PC-9 (cell line): ENCODE measurements at regions of chr1 and their contacts with region 1.

Region 1: GRCh38 chr1:41381692-41382477 is 20.7 kb downstream of the FOXO6 start:
- DNase-seq: peak in 1 of 2 experiments; percentile 81
- H3K4me3 ChIP-seq: peak overlapping the region; percentile 91
- H3K27ac ChIP-seq: peak overlapping the region; percentile 82
- H3K4me1 ChIP-seq: peaks cover 28% of the 10 kb centered on the region
- H3K27me3 ChIP-seq: no peaks in the 10 kb centered on the region
- CTCF ChIP-seq: no peak

Region 2: DNA sequence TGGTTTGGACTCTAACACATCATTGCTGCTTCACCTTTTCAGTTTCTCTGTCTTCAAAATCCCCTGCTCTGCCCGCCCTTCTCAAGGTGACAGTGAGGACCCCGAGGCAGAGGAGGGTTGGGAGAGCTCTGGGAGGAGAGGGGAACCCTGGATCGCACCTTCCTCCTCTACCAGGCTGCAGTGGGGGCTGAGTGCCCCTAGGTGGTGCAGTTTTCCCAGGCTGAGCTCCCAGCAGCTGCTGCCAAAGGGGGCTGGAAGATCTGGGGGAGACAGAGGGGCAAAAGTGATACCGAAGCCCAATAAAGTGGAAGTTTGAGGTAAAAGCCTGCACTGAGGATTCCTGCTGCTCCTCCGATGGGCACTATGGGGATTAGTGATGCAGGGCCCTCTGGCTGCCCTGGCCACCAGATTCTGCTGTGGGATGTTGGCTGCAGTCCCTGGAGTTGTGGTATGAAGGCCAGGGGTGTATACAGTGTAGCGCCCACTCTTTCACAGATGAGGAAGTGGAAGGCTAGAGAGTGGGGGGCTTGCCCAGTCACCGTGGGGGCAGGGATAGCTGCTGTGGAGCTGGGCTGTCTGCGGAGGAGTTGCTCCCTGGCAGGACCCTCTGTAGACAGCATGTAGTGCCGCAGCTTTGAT is 99.1 kb before region 1 on chr1:
- CTCF ChIA-PET with region 1: no interaction called
- POLR2A ChIA-PET with region 1: no interaction called
- intact Hi-C with region 1: loop called (anchors 1 kb)
- DNase-seq: peak in 1 of 2 experiments; percentile 54
- H3K4me3 ChIP-seq: no peak overlapping the region
- H3K27ac ChIP-seq: no peak overlapping the region
- H3K4me1 ChIP-seq: no peaks in the 10 kb centered on the region; the same call in 1 of the 2 replicates
- H3K27me3 ChIP-seq: peaks cover 6% of the 10 kb centered on the region; the same call in 1 of the 2 replicates
- CTCF ChIP-seq: peak; percentile 87

Region 3: GRCh38 chr1:41484372-41485241 is 102.7 kb after region 1 on chr1 and contains the start of gene EDN2:
- CTCF ChIA-PET with region 1: no interaction called
- POLR2A ChIA-PET with region 1: no interaction called
- intact Hi-C with region 1: no loop called
- DNase-seq: peak in 1 of 2 experiments; percentile 88
- H3K4me3 ChIP-seq: no peak within 1 kb of the TSS
- H3K27ac ChIP-seq: no peak within 1 kb of the TSS
- H3K4me1 ChIP-seq: peaks cover 27% of the 10 kb centered on the region
- H3K27me3 ChIP-seq: no peaks in the 10 kb centered on the region
- CTCF ChIP-seq: peak; percentile 49
- total RNA-seq, gene EDN2: 0.43 and 0.48 TPM in 2 replicates